Mammary epithelial cell (primary cell): ENCODE measurements at regions of chr9 and their contacts with region 1.

Region 1: GRCh38 chr9:40927851-40928802 is 200.4 kb downstream of the FOXD4L6 start:
- DNase-seq: no peak
- H3K4me3 ChIP-seq: no peak overlapping the region
- H3K27ac ChIP-seq: no peak overlapping the region
- H3K4me1 ChIP-seq: no peaks in the 10 kb centered on the region
- H3K27me3 ChIP-seq: no peaks in the 10 kb centered on the region
- CTCF ChIP-seq: no peak

Region 2: GRCh38 chr9:40884072-40884901 is 43.8 kb before region 1 on chr9:
- CTCF ChIA-PET with region 1: no interaction called
- dilution Hi-C with region 1: no loop called
- in situ Hi-C with region 1: no loop called
- intact Hi-C with region 1: loop called (anchors 10 kb)
- DNase-seq: no peak
- H3K4me3 ChIP-seq: no peak overlapping the region
- H3K27ac ChIP-seq: no peak overlapping the region
- H3K4me1 ChIP-seq: no peaks in the 10 kb centered on the region
- H3K27me3 ChIP-seq: no peaks in the 10 kb centered on the region
- CTCF ChIP-seq: no peak